ENCODE measurements at regions of chr7 and their contacts with region 1.

Region 1: GRCh38 chr7:72538147-72538546 is 126.0 kb upstream of the CALN1 start:
- DNase-seq: no peak
- ATAC-seq: no peak
- H3K4me3 ChIP-seq: no peak overlapping the region
- H3K27ac ChIP-seq: no peak overlapping the region
- H3K4me1 ChIP-seq: no peaks in the 10 kb centered on the region
- H3K27me3 ChIP-seq: no peaks in the 10 kb centered on the region
- CTCF ChIP-seq: no peak
- POLR2A ChIP-seq: no peak
- RAD21 ChIP-seq: no peak

Region 2: DNA sequence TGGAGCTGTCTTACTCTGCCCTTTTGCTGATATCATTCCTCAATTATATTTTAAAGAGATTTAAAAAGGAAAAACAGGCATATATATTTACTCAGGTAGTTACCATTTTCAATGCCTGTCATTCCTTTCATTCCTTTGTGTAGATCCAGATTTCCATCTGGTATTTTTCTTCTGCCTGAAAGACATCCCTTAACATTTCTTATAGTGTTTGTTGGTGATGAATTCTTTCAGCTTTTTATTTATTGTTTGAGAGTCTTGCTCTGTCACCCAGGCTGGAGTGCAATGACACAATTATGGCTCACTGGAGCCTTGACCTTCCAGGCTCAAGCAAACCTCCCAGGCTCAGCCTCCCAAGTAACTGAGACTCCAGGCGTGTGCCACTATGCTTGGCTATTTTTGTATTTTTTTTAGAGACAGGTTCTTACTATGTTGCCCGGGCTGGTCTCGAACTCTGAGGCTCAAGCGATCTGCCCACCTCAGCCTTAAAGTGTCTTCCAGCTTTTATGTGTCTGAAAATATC is 381.2 kb after region 1 on chr7:
- CTCF ChIA-PET with region 1: no interaction called
- POLR2A ChIA-PET with region 1: interaction called, 14 read pairs
- dilution Hi-C with region 1: no loop called
- in situ Hi-C with region 1: no loop called
- intact Hi-C with region 1: no loop called
- DNase-seq: no peak
- ATAC-seq: peak; percentile 43
- H3K4me3 ChIP-seq: no peak overlapping the region
- H3K27ac ChIP-seq: no peak overlapping the region
- H3K4me1 ChIP-seq: peaks cover 8% of the 10 kb centered on the region
- H3K27me3 ChIP-seq: no peaks in the 10 kb centered on the region
- CTCF ChIP-seq: no peak
- POLR2A ChIP-seq: no peak
- RAD21 ChIP-seq: no peak